ENCODE measurements at regions of chr11 and their contacts with region 1.

Region 1: DNA sequence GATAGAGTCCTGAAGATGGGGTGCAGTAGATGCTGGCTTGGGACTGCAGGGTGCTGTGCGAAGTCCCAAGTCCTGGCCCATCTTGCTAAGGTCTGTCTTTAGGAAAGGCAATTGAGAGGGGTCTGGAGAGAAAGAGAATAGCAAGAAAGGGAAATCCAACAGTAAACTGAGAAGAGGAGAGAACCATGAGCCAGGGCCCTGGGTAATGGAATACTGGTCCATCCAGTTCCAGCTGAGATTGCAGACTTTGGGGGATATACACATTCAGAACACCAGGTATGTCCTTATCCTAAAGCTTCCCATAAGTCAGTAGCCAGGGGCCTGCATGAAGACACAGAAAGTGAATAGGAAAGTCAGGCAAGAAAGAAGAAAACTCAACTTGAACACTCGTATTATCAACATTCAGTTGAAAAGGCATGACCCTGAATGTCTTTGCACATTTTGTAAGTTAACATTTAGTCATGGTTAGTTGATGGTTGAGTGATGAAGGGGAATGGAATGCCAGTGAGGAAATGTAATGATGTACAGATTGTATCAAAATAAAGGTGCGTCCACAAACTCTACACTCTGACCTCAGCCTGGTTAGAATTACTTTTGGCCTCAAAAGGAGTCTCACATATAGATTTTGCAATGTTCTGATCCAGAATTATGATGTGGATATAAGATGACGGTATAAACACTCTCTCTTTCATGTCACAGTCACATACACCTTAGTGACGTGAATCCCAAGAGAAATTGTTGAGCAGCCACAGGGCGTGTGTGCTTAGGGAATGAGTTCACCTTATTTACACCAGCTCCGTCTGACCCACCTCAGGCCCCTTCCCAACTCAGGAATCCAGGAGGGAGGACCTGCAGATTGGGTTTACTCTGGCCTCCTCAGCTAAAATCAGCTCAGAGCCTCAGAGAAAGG is 100.3 kb downstream of the RDX start:
- DNase-seq: peak; percentile 45
- H3K4me3 ChIP-seq: no peak overlapping the region
- H3K27ac ChIP-seq: peak overlapping the region; percentile 78
- H3K4me1 ChIP-seq: peaks cover 36% of the 10 kb centered on the region
- H3K27me3 ChIP-seq: no peaks in the 10 kb centered on the region
- CTCF ChIP-seq: no peak
- POLR2A ChIP-seq: peak; percentile 42

Region 2: DNA sequence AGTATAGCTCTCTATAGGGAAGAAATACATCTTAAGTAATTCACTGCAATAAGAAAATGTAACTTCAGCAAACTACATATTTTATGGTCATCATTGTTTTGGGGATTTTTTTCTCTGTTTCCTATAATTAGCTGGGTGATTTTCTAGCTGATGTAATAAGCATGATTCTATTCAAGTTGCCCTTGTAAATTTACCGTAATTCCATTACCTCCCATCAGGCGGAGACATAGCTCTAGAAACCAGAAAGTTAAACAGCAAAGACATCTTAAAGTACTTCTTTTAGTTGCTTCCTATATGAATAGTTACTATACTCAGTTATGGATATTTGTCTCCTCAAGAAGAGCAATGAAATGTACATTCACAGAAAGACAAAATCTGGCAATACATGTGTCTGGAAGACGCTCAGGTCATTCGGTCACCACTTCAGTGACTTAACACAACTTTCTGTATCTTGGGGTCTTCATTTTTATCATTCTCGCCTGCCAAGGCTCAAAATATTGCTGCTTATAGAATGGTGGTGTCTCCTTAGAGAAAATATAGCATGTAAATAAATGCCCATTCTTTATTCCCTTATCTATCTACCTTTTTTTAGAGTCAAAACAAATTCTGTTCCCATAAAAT is 342.8 kb before region 1 on chr11:
- CTCF ChIA-PET with region 1: interaction called, 10 read pairs
- POLR2A ChIA-PET with region 1: no interaction called
- dilution Hi-C with region 1: no loop called
- intact Hi-C with region 1: loop called (anchors 2 kb)
- DNase-seq: peak; percentile 90
- H3K4me3 ChIP-seq: no peak overlapping the region
- H3K27ac ChIP-seq: no peak overlapping the region
- H3K4me1 ChIP-seq: no peaks in the 10 kb centered on the region
- H3K27me3 ChIP-seq: peaks cover 0 to 1% of the 10 kb centered on the region in 2 experiments
- CTCF ChIP-seq: peak; percentile 48 to 53
- POLR2A ChIP-seq: no peak

Region 3: GRCh38 chr11:110092515-110093404 is 103.3 kb before region 1 on chr11 and contains the start of gene ZC3H12C:
- CTCF ChIA-PET with region 1: interaction called, 7 read pairs
- POLR2A ChIA-PET with region 1: no interaction called
- dilution Hi-C with region 1: no loop called
- intact Hi-C with region 1: loop called (anchors 1 kb)
- DNase-seq: peak; percentile 89
- H3K4me3 ChIP-seq: peak within 1 kb of the TSS; percentile 58 to 92 (median 88)
- H3K27ac ChIP-seq: peak within 1 kb of the TSS; percentile 81
- H3K4me1 ChIP-seq: peaks cover 22% of the 10 kb centered on the region
- H3K27me3 ChIP-seq: peaks cover 2 to 3% of the 10 kb centered on the region in 2 experiments
- CTCF ChIP-seq: peak; percentile 54 to 60
- POLR2A ChIP-seq: peak; percentile 32
- total RNA-seq, gene ZC3H12C: 14.5 and 14.7 TPM in 2 replicates

Region 4: GRCh38 chr11:110243791-110244190 is 47.7 kb after region 1 on chr11:
- CTCF ChIA-PET with region 1: interaction called, 12 read pairs
- POLR2A ChIA-PET with region 1: no interaction called
- dilution Hi-C with region 1: no loop called
- intact Hi-C with region 1: no loop called
- DNase-seq: no peak
- H3K4me3 ChIP-seq: no peak overlapping the region
- H3K27ac ChIP-seq: no peak overlapping the region
- H3K4me1 ChIP-seq: no peaks in the 10 kb centered on the region
- H3K27me3 ChIP-seq: no peaks in the 10 kb centered on the region
- CTCF ChIP-seq: no peak
- POLR2A ChIP-seq: no peak

Region 5: DNA sequence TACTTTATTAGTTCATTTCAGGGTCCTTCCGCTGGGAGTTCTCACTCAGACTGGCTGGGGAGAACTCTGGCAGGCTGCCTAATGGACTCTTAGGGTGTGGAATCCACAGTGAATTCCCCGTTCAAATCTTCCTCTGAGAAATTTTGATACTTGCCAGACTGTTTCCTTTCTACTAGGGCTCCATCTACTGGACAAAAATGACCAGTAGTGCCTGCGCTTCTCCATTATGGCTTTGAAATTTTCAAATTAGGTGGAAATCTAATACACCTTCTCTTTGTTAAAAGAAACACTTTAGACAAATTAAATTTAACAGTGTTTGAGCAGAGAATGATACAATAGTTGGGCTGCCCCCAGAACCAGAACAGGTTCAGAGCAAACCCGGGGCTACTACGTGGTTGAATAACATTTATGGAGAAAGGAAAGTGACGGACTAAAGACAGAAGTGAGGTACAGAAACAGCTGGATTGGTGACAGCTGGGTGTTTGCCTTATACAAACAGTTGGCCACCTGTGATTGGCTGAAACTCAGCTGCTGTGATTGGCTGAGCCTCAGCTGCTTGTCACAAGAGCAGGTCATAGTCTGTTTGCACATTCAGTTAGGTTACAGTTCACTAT is 180.7 kb after region 1 on chr11:
- CTCF ChIA-PET with region 1: interaction called, 44 read pairs
- POLR2A ChIA-PET with region 1: no interaction called
- dilution Hi-C with region 1: no loop called
- intact Hi-C with region 1: loop called (anchors 1 kb)
- DNase-seq: peak; percentile 93
- H3K4me3 ChIP-seq: no peak overlapping the region
- H3K27ac ChIP-seq: no peak overlapping the region
- H3K4me1 ChIP-seq: peaks cover 24% of the 10 kb centered on the region
- H3K27me3 ChIP-seq: no peaks in the 10 kb centered on the region
- CTCF ChIP-seq: peak; percentile 52 to 72
- POLR2A ChIP-seq: no peak

Region 6: GRCh38 chr11:110837603-110838002 is 641.5 kb after region 1 on chr11:
- CTCF ChIA-PET with region 1: no interaction called
- POLR2A ChIA-PET with region 1: no interaction called
- dilution Hi-C with region 1: no loop called
- intact Hi-C with region 1: no loop called
- DNase-seq: no peak
- H3K4me3 ChIP-seq: no peak overlapping the region
- H3K27ac ChIP-seq: no peak overlapping the region
- H3K4me1 ChIP-seq: peaks cover 13% of the 10 kb centered on the region
- H3K27me3 ChIP-seq: no peaks in the 10 kb centered on the region
- CTCF ChIP-seq: no peak
- POLR2A ChIP-seq: no peak

Region 7: DNA sequence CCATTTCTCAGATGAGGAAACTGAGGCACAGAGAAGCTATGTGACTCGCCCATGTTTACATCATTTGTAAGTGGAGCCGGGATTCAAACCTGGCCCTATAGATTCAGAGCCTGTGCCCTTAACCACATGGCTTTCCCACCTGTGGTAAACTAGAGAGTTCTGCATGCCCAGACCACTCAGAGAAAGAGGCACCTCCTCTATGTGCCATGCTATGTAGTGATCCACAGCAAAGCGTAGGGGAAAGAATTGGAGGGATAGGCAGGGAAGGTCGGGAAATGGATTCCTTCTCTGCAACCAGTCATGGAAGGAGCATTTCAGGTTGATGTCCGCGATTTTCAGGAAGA is 1034.0 kb after region 1 on chr11:
- CTCF ChIA-PET with region 1: no interaction called
- POLR2A ChIA-PET with region 1: no interaction called
- dilution Hi-C with region 1: no loop called
- intact Hi-C with region 1: loop called (anchors 5 kb)
- DNase-seq: no peak
- H3K4me3 ChIP-seq: no peak overlapping the region
- H3K27ac ChIP-seq: no peak overlapping the region
- H3K4me1 ChIP-seq: no peaks in the 10 kb centered on the region
- H3K27me3 ChIP-seq: peaks cover 1 to 3% of the 10 kb centered on the region in 2 experiments
- CTCF ChIP-seq: no peak
- POLR2A ChIP-seq: no peak

Measured in endothelial cell of umbilical vein (primary cell).